ENCODE measurements at regions of chr6 and their contacts with region 1.

Region 1: DNA sequence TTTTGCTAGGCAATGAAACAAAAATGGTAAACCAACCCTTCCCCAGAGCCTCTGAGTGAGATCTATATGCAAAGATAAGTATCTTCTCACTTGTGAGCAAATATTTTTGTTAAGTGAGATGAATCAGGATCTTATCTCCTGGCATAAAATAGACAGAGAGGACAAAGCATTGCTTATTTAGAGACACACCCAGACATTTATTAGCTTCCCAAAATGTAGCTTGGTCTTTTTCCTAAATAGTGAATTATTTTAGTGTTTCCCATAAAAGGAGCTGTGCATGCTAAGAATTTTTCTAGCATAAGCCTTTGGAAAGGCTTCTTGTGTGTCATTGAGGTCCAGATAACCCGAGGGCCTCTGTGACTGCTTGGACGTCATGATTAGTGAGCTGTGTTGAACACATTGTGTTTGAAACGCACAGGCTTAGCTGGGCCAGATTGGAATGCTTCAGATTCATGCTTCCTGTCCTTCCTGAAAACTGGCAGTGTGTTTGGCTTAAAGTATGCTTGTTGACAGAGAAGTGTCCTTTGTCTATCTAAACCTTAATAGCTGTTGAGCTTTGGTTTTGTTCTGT is 16.5 kb downstream of the MTHFD1L start:
- DNase-seq: peak; percentile 98
- H3K4me3 ChIP-seq: no peak overlapping the region
- H3K27ac ChIP-seq: peak overlapping the region; percentile 91
- H3K4me1 ChIP-seq: peaks cover 36% of the 10 kb centered on the region
- H3K27me3 ChIP-seq: no peaks in the 10 kb centered on the region
- CTCF ChIP-seq: no peak
- POLR2A ChIP-seq: no peak

Region 2: GRCh38 chr6:150600301-150601017 is 281.5 kb before region 1 on chr6:
- CTCF ChIA-PET with region 1: no interaction called
- POLR2A ChIA-PET with region 1: no interaction called
- dilution Hi-C with region 1: no loop called
- intact Hi-C with region 1: no loop called
- DNase-seq: peak; percentile 76
- H3K4me3 ChIP-seq: peak overlapping the region; percentile 68 to 80 (median 70)
- H3K27ac ChIP-seq: peak overlapping the region; percentile 35
- H3K4me1 ChIP-seq: peaks cover 8% of the 10 kb centered on the region
- H3K27me3 ChIP-seq: peaks cover 21 to 31% of the 10 kb centered on the region in 2 experiments
- CTCF ChIP-seq: peak; percentile 43 to 61
- POLR2A ChIP-seq: no peak

Region 3: DNA sequence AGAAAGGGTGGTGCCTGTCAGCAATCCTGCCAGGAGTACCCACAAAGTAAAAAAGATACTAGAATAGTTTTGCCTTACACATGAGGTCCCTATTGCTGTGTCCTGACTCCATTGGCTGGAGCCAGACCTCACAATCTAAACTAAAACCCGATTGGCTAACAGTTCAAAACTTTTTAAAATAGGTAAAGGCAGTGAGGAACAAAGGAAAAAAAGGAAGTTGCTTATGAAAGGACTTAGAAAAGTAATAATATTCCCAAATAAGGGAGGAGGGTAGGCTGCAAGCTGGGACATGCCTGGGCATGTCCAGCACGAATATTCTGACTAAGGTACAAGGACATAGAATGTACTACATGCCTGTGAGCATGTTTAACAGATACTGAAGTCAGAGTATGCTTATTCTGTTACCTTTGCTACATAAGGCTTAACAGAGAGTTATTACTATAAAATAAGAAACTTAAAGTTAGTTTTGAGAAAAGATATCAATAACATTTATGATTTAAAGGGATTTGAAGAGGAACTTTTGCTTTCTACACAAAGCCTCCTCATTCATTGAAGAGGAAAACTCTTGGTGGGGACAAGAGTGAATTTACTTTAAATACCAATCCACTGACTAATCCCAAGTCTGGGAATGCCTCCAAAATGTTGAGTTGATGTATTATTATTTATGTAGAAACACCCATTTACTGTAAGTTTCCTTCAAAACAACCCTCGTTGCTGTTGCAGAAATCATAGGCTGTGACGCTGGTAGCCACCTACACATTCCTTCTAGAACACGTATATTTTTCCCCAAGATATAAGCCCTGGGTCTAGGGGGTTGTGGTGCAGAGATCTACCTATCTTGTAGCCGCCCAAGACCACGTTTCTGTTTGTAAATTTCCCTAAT is 24.7 kb before region 1 on chr6:
- CTCF ChIA-PET with region 1: interaction called, 5 read pairs
- POLR2A ChIA-PET with region 1: interaction called, 3 read pairs
- dilution Hi-C with region 1: no loop called
- intact Hi-C with region 1: loop called (anchors 1 kb)
- DNase-seq: peak; percentile 99
- H3K4me3 ChIP-seq: no peak overlapping the region
- H3K27ac ChIP-seq: peak overlapping the region; percentile 100
- H3K4me1 ChIP-seq: peaks cover 24% of the 10 kb centered on the region
- H3K27me3 ChIP-seq: no peaks in the 10 kb centered on the region
- CTCF ChIP-seq: no peak
- POLR2A ChIP-seq: peak; percentile 83

Region 4: GRCh38 chr6:150865406-150866146 is 16.4 kb before region 1 on chr6 and contains the start of gene MTHFD1L:
- CTCF ChIA-PET with region 1: interaction called, 18 read pairs
- POLR2A ChIA-PET with region 1: interaction called, 23 read pairs
- dilution Hi-C with region 1: no loop called
- intact Hi-C with region 1: loop called (anchors 1 kb)
- DNase-seq: peak; percentile 86
- H3K4me3 ChIP-seq: peak within 1 kb of the TSS; percentile 90 to 93 (median 92)
- H3K27ac ChIP-seq: peak within 1 kb of the TSS; percentile 93
- H3K4me1 ChIP-seq: peaks cover 25% of the 10 kb centered on the region
- H3K27me3 ChIP-seq: no peaks in the 10 kb centered on the region
- CTCF ChIP-seq: peak; percentile 58 to 62
- POLR2A ChIP-seq: peak; percentile 60
- total RNA-seq, gene MTHFD1L: 120 and 121 TPM in 2 replicates

Region 5: GRCh38 chr6:151036869-151037680 is 155.1 kb after region 1 on chr6:
- CTCF ChIA-PET with region 1: no interaction called
- POLR2A ChIA-PET with region 1: no interaction called
- dilution Hi-C with region 1: no loop called
- intact Hi-C with region 1: loop called (anchors 1 kb)
- DNase-seq: peak; percentile 82
- H3K4me3 ChIP-seq: no peak overlapping the region
- H3K27ac ChIP-seq: peak overlapping the region; percentile 100
- H3K4me1 ChIP-seq: peaks cover 52% of the 10 kb centered on the region
- H3K27me3 ChIP-seq: no peaks in the 10 kb centered on the region
- CTCF ChIP-seq: no peak
- POLR2A ChIP-seq: peak; percentile 44

Region 6: GRCh38 chr6:151067684-151068596 is 185.9 kb after region 1 on chr6:
- CTCF ChIA-PET with region 1: no interaction called
- POLR2A ChIA-PET with region 1: no interaction called
- dilution Hi-C with region 1: no loop called
- intact Hi-C with region 1: loop called (anchors 5 kb)
- DNase-seq: peak; percentile 99
- H3K4me3 ChIP-seq: no peak overlapping the region
- H3K27ac ChIP-seq: peak overlapping the region; percentile 90
- H3K4me1 ChIP-seq: peaks cover 61% of the 10 kb centered on the region
- H3K27me3 ChIP-seq: no peaks in the 10 kb centered on the region
- CTCF ChIP-seq: no peak
- POLR2A ChIP-seq: peak; percentile 47

Region 7: DNA sequence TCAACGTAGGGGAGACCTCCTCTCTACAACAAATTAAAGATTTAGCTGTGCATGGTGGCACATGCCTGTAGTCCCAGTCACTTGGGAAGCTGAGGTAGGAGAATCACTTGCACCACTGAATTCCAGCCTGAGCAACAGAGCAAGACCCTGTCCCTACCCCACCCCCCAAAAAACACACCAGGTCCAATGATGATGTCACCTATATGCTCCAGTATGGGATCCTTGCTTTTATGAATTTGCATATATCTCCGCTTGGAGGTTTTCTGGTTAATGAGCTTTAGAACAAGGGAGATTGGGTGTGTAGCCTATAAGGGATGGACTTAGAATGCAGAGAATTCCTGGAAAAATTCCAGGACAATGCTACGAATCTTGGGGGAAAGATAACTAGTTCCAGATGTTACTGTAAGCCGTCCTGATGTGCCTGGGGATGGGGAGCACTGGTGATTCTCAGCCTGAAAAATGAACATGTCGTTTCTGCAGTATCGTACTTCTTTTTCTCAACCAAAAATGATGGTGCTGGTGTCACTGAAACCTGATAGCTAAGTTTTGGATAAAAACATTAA is 448.2 kb after region 1 on chr6:
- CTCF ChIA-PET with region 1: interaction called, 12 read pairs
- POLR2A ChIA-PET with region 1: interaction called, 4 read pairs
- dilution Hi-C with region 1: no loop called
- intact Hi-C with region 1: no loop called
- DNase-seq: no peak
- H3K4me3 ChIP-seq: no peak overlapping the region
- H3K27ac ChIP-seq: no peak overlapping the region
- H3K4me1 ChIP-seq: peaks cover 9% of the 10 kb centered on the region
- H3K27me3 ChIP-seq: no peaks in the 10 kb centered on the region
- CTCF ChIP-seq: no peak
- POLR2A ChIP-seq: no peak